Panc1 (cell line): ENCODE measurements at regions of chr1 and their contacts with region 1.

Region 1: GRCh38 chr1:111481387-111482221 is 7.8 kb downstream of the C1orf162 start:
- DNase-seq: peak; percentile 46
- ATAC-seq: peak; percentile 91
- H3K4me3 ChIP-seq: no peak overlapping the region
- H3K27ac ChIP-seq: no peak overlapping the region
- H3K4me1 ChIP-seq: no peaks in the 10 kb centered on the region
- H3K27me3 ChIP-seq: no peaks in the 10 kb centered on the region
- CTCF ChIP-seq: peak; percentile 70

Region 2: DNA sequence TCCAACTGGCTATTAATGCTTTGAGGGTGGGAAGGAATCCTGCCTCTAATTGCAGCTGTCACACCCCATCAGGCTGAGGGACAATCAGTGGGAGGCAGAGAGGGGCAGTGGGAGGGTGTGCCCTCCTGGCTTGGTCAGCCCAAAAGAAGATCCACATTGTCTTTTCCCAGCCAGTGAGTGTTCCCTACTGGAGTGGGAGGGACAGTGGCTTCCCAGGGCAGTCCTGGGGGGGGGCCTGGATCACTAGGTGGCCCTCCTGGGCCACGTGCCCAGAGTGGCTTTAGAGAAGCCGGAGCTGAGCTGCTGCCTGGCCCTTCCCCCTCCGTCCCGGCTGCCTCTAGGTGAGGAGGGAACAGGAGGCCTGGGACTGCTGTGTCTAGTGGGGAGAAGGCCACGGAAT is 243.6 kb after region 1 on chr1:
- CTCF ChIA-PET with region 1: interaction called, 12 read pairs
- POLR2A ChIA-PET with region 1: no interaction called
- in situ Hi-C with region 1: no loop called
- intact Hi-C with region 1: no loop called
- DNase-seq: no peak
- ATAC-seq: no peak
- H3K4me3 ChIP-seq: no peak overlapping the region
- H3K27ac ChIP-seq: no peak overlapping the region
- H3K4me1 ChIP-seq: no peaks in the 10 kb centered on the region
- H3K27me3 ChIP-seq: no peaks in the 10 kb centered on the region
- CTCF ChIP-seq: no peak

Region 3: DNA sequence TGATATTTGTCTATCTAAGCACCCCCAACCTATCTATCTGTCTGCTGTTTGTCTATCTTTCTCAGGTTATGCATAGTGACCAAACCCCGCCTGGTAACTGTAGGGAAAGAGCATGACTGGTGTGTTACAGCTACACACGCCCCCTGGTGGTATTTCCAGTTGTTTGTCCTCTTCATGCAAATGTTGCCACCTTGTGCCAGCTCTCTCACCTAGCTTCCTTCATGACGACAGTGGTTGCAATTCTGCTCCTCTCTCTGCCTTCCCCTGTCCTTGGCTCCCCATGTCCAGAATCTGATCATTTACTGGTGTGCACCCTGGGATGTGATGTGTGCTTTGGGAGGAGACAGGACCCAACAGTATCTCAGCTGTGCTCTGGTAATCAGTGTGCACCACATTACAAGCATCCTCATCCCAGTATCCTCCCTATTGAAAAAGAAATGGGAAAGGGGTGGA is 265.7 kb after region 1 on chr1:
- CTCF ChIA-PET with region 1: interaction called, 13 read pairs
- POLR2A ChIA-PET with region 1: no interaction called
- in situ Hi-C with region 1: no loop called
- intact Hi-C with region 1: loop called (anchors 10 kb)
- DNase-seq: no peak
- ATAC-seq: peak; percentile 83
- H3K4me3 ChIP-seq: no peak overlapping the region
- H3K27ac ChIP-seq: no peak overlapping the region
- H3K4me1 ChIP-seq: no peaks in the 10 kb centered on the region
- H3K27me3 ChIP-seq: no peaks in the 10 kb centered on the region
- CTCF ChIP-seq: peak; percentile 76

Region 4: DNA sequence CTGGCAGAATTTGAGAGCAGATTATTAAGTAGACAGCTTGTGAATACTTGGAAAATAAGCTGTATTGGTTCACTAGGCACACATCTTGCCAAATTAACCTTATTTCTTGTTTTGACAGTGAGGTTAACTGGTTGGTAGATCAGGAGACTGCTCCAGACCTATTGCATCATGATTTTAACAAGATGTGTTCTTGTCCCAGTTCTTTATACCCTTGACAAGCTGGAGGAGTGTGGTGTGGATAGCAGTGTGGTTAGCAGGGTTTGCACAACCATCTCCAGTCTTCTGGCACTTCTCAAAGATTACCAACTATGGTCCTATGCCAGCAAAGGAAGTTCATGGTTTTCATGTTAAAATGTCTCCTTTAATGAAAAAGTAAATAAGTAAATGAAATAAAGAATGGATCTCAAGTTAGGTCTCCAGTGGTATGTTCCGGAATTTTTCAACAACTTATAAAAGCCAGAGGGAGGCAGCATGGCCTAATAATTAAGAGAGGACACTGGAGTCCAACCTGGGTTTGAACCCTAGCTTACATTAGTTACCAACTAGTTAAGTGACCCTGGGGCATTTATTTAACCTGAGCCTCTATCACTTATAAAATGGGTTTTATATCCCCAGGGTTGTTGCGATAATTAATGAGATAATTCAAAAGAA is 308.2 kb after region 1 on chr1:
- CTCF ChIA-PET with region 1: interaction called, 13 read pairs
- POLR2A ChIA-PET with region 1: no interaction called
- in situ Hi-C with region 1: no loop called
- intact Hi-C with region 1: no loop called
- DNase-seq: no peak
- ATAC-seq: no peak
- H3K4me3 ChIP-seq: no peak overlapping the region
- H3K27ac ChIP-seq: no peak overlapping the region
- H3K4me1 ChIP-seq: no peaks in the 10 kb centered on the region
- H3K27me3 ChIP-seq: peaks cover 3% of the 10 kb centered on the region
- CTCF ChIP-seq: no peak

Region 5: GRCh38 chr1:112369392-112370285 is 888.0 kb after region 1 on chr1:
- CTCF ChIA-PET with region 1: interaction called, 10 read pairs
- POLR2A ChIA-PET with region 1: no interaction called
- in situ Hi-C with region 1: no loop called
- intact Hi-C with region 1: no loop called
- DNase-seq: no peak
- ATAC-seq: peak; percentile 100
- H3K4me3 ChIP-seq: no peak overlapping the region
- H3K27ac ChIP-seq: no peak overlapping the region
- H3K4me1 ChIP-seq: no peaks in the 10 kb centered on the region
- H3K27me3 ChIP-seq: peaks cover 2% of the 10 kb centered on the region; the same call in 1 of the 2 replicates
- CTCF ChIP-seq: peak; percentile 95